Heart left ventricle (tissue), 16 donors: ENCODE measurements at regions of chr15 and their contacts with region 1.

Region 1: DNA sequence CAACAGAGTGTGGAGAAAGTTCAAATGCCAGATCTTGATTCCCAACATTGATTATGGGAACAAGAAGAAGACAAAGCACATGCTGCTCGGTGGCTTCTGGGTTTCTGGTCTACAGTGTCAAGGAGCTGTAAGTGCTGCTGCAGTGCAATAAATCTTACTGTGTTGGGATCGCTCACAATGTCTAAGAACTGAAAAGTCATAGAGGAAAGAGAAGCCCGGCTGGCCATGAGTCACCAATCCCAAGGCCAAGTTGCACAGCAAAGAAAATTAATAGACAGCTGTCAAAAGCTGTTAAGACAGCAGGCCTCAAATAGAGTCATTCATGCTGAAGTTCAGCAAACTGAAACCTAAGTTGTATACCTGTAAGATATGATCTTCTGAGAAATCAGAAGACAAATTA is 33.2 kb upstream of the SPPL2A start:
- DNase-seq: no peak
- ATAC-seq: no peak
- H3K4me3 ChIP-seq: no peak overlapping the region
- H3K27ac ChIP-seq: no peak overlapping the region
- H3K4me1 ChIP-seq: no peaks in the 10 kb centered on the region
- H3K27me3 ChIP-seq: no peaks in the 10 kb centered on the region
- CTCF ChIP-seq: no peak
- POLR2A ChIP-seq: no peak

Region 2: GRCh38 chr15:50531766-50532165 is 266.9 kb before region 1 on chr15:
- intact Hi-C with region 1: no loop called
- DNase-seq: no peak
- ATAC-seq: no peak
- H3K4me3 ChIP-seq: no peak overlapping the region
- H3K27ac ChIP-seq: no peak overlapping the region
- H3K4me1 ChIP-seq: no peaks in the 10 kb centered on the region
- H3K27me3 ChIP-seq: no peaks in the 10 kb centered on the region
- CTCF ChIP-seq: no peak
- POLR2A ChIP-seq: no peak

Region 3: DNA sequence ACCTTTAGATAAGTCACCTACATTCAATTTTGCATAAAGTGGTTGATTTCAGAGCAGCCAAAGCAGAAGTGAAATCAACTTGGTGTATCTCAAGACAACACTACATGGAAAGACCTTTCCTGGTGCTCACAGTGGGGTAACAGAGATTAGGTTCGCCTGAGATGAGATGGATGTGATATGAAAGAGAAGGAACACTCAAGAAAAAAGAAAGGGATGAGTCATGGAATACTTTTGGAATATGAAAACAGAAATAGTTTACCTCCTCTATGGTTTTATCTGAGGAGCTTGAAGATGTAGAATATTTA is 56.4 kb after region 1 on chr15:
- intact Hi-C with region 1: loop called in 1 of 10 experiments (anchors 10 kb)
- DNase-seq: no peak
- ATAC-seq: no peak
- H3K4me3 ChIP-seq: no peak overlapping the region
- H3K27ac ChIP-seq: no peak overlapping the region
- H3K4me1 ChIP-seq: peaks cover 0 to 9% (median 0%) of the 10 kb centered on the region in 12 donors
- H3K27me3 ChIP-seq: no peaks in the 10 kb centered on the region
- CTCF ChIP-seq: no peak
- POLR2A ChIP-seq: no peak